Activated T-helper 1 cell treated with anti-CD3 and anti-CD28 coated beads, Interleukin-12 subunit alpha, Interleukin-12 subunit beta, Interleukin-2, Interleukin-4 antibody, amounts not matched to agents 30 ng/mL and 10 ng/mL and 1 ng/mL, durations not matched to agents 14 hours and 24 hours and 36 hours (primary cell): ENCODE measurements at regions of chr10 and their contacts with region 1.

Region 1: DNA sequence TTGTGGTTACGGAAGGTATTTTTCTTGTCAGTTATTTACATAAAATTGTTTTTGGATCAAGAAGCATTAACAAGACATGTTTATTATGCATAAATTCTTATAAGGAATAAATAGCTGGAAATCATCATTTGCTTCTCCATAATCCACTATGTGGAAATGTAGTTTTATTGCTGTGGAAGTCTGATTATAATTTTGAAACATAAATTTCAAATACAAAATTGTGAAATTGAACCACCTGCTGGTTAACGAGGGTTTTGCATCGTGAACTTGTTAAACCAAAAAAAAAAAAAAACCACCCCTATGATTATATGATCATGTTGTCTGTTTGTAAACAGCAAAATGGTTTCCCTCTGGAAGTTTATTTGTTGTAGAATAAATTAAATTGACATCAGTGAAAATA is 25.9 kb downstream of the ABRAXAS2 start:
- DNase-seq: no peak
- H3K4me3 Mint-ChIP-seq: no peak overlapping the region
- H3K27ac Mint-ChIP-seq: no peak overlapping the region
- H3K4me1 Mint-ChIP-seq: no peaks in the 10 kb centered on the region
- H3K27me3 Mint-ChIP-seq: no peaks in the 10 kb centered on the region

Region 2: GRCh38 chr10:124493214-124493882 is 334.1 kb before region 1 on chr10:
- intact Hi-C with region 1: no loop called
- DNase-seq: no peak
- H3K4me3 Mint-ChIP-seq: no peak overlapping the region
- H3K27ac Mint-ChIP-seq: no peak overlapping the region
- H3K4me1 Mint-ChIP-seq: peaks cover 13% of the 10 kb centered on the region
- H3K27me3 Mint-ChIP-seq: no peaks in the 10 kb centered on the region

Region 3: GRCh38 chr10:124530215-124530665 is 297.2 kb before region 1 on chr10:
- intact Hi-C with region 1: loop called (anchors 1 kb)
- DNase-seq: peak; percentile 78
- H3K4me3 Mint-ChIP-seq: no peak overlapping the region
- H3K27ac Mint-ChIP-seq: no peak overlapping the region
- H3K4me1 Mint-ChIP-seq: peaks cover 5% of the 10 kb centered on the region
- H3K27me3 Mint-ChIP-seq: peaks cover 10% of the 10 kb centered on the region

Region 4: GRCh38 chr10:124539935-124540641 is 287.4 kb before region 1 on chr10:
- intact Hi-C with region 1: loop called (anchors 1 kb)
- DNase-seq: peak; percentile 34
- H3K4me3 Mint-ChIP-seq: no peak overlapping the region
- H3K27ac Mint-ChIP-seq: no peak overlapping the region
- H3K4me1 Mint-ChIP-seq: no peaks in the 10 kb centered on the region
- H3K27me3 Mint-ChIP-seq: peaks cover 4% of the 10 kb centered on the region

Region 5: GRCh38 chr10:124755581-124755980 is 71.9 kb before region 1 on chr10:
- intact Hi-C with region 1: no loop called
- DNase-seq: no peak
- H3K4me3 Mint-ChIP-seq: no peak overlapping the region
- H3K27ac Mint-ChIP-seq: no peak overlapping the region
- H3K4me1 Mint-ChIP-seq: peaks cover 3% of the 10 kb centered on the region
- H3K27me3 Mint-ChIP-seq: no peaks in the 10 kb centered on the region

Region 6: GRCh38 chr10:124842721-124843120 is 15.2 kb after region 1 on chr10:
- intact Hi-C with region 1: no loop called
- DNase-seq: no peak
- H3K4me3 Mint-ChIP-seq: no peak overlapping the region
- H3K27ac Mint-ChIP-seq: no peak overlapping the region
- H3K4me1 Mint-ChIP-seq: no peaks in the 10 kb centered on the region
- H3K27me3 Mint-ChIP-seq: no peaks in the 10 kb centered on the region